IMR-90 (cell line): ENCODE measurements at regions of chr1 and their contacts with region 1.

Region 1: GRCh38 chr1:167297222-167298214 is 76.8 kb downstream of the POU2F1 start:
- DNase-seq: peak; percentile 3
- ATAC-seq: peak; percentile 59
- H3K4me3 ChIP-seq: no peak overlapping the region
- H3K27ac ChIP-seq: no peak overlapping the region
- H3K4me1 ChIP-seq: no peaks in the 10 kb centered on the region
- H3K27me3 ChIP-seq: no peaks in the 10 kb centered on the region
- CTCF ChIP-seq: no peak
- POLR2A ChIP-seq: no peak
- RAD21 ChIP-seq: no peak

Region 2: GRCh38 chr1:167095368-167095767 is 202.2 kb before region 1 on chr1:
- CTCF ChIA-PET with region 1: no interaction called
- POLR2A ChIA-PET with region 1: no interaction called
- dilution Hi-C with region 1: no loop called
- in situ Hi-C with region 1: no loop called
- intact Hi-C with region 1: no loop called
- DNase-seq: peak; percentile 61
- ATAC-seq: peak; percentile 40; the same call in 1 of the 2 replicates
- H3K4me3 ChIP-seq: no peak overlapping the region
- H3K27ac ChIP-seq: no peak overlapping the region
- H3K4me1 ChIP-seq: no peaks in the 10 kb centered on the region
- H3K27me3 ChIP-seq: no peaks in the 10 kb centered on the region
- CTCF ChIP-seq: no peak
- POLR2A ChIP-seq: no peak
- RAD21 ChIP-seq: no peak

Region 3: DNA sequence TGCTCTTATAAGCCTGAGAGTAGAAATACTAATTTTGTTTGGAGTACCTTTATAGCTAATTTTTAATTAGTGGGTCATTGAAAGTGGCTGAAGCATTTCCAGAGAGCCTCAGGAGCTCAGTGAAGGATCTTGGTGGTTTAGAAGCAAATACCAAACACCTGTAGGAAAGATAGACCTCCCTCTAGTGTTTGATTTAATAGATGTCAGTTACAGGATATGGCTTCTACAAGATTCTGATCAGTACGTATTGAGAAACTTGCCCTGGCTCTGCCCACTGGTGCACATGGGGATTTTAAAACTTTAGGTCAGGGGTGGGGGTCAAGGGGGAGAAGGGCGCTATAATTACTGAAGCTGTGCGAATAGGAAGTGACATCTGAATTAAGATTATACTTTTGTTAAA is 45.3 kb after region 1 on chr1:
- CTCF ChIA-PET with region 1: no interaction called
- POLR2A ChIA-PET with region 1: no interaction called
- dilution Hi-C with region 1: no loop called
- in situ Hi-C with region 1: no loop called
- intact Hi-C with region 1: loop called (anchors 5 kb)
- DNase-seq: no peak
- ATAC-seq: no peak
- H3K4me3 ChIP-seq: no peak overlapping the region
- H3K27ac ChIP-seq: no peak overlapping the region
- H3K4me1 ChIP-seq: peaks cover 3% of the 10 kb centered on the region; the same call in 1 of the 2 replicates
- H3K27me3 ChIP-seq: no peaks in the 10 kb centered on the region
- CTCF ChIP-seq: no peak
- POLR2A ChIP-seq: no peak
- RAD21 ChIP-seq: no peak

Region 4: GRCh38 chr1:168553680-168554553 is 1256.4 kb after region 1 on chr1:
- CTCF ChIA-PET with region 1: no interaction called
- POLR2A ChIA-PET with region 1: no interaction called
- dilution Hi-C with region 1: no loop called
- in situ Hi-C with region 1: no loop called
- intact Hi-C with region 1: no loop called
- DNase-seq: no peak
- ATAC-seq: no peak
- H3K4me3 ChIP-seq: no peak overlapping the region
- H3K27ac ChIP-seq: no peak overlapping the region
- H3K4me1 ChIP-seq: no peaks in the 10 kb centered on the region
- H3K27me3 ChIP-seq: no peaks in the 10 kb centered on the region
- CTCF ChIP-seq: no peak
- POLR2A ChIP-seq: no peak
- RAD21 ChIP-seq: no peak